ENCODE measurements at regions of chr17 and their contacts with region 1.

Region 1: DNA sequence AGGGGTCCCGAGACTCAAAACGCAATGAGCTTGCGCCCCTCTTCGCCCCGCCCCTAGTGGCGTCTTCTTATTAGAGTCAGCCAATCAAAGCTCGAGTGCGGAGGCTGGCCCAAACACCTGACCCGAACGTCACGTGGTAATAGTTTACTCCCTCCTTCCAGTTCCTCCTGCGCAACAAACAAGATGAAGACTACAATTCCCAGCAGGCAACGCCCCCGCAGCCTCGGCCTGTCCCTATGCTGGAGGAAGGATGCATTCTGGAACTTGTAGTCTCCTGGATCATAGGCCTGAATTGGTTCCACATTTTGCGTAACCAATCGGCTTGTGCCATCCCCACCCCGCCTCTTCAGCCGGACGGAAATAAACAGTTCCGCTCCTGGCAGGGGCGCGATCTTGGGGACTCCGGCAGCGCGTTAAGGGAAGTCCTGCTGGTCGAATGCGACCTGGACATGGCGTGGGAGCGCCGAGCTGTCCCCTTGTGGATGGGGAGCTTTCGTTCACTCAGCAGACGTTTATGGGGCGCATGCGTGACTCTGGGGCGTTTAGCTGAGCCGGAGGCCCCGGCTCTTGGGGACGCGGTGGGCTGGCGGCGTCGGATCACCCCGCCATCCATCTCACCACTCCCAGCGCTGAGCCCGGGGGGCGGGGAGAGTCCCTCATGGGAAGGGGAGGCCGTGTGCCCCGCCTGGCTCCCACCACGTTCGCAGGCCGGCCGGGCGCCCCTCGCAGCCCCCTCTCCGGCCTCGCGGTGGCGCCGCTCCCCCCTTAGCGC is at the start of gene WBP2:
- DNase-seq: peak; percentile 99
- ATAC-seq: peak; percentile 90
- H3K4me3 Mint-ChIP-seq: no peak within 1 kb of the TSS
- H3K27ac Mint-ChIP-seq: peak within 1 kb of the TSS; percentile 95
- H3K4me1 Mint-ChIP-seq: peaks cover 38% of the 10 kb centered on the region
- H3K27me3 Mint-ChIP-seq: no peaks in the 10 kb centered on the region
- total RNA-seq, gene WBP2: 71.3 to 79.1 TPM

Region 2: DNA sequence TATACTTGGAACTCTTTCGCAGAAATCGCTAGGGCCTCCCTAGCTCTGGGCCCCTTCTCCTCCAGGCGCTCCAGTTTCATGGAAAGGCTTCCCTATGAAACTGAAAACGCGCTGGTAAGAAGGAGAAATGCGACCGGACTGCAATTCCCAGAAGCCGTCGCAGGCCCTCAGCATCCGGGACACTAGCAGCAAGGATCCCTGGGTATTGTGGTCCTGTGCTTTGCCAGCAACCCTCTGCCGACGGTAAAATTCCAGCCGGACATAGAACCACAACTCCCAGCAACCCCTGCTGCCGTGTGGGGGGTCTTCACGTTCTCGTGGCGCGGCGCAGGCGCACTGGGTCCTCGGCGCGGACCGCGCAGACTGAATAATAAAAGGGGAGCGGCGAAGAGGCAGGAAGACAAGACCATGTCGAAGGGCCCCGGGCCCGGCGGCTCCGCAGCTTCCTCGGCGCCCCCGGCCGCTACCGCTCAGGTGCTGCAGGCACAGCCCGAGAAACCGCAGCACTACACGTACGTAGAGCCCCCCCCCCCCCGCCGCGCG is 71.0 kb before region 1 on chr17 and contains the start of gene UNK:
- CTCF ChIA-PET with region 1: interaction called, 12 read pairs
- DNase-seq: peak; percentile 99
- ATAC-seq: peak; percentile 72
- H3K4me3 Mint-ChIP-seq: peak within 1 kb of the TSS; percentile 79
- H3K27ac Mint-ChIP-seq: peak within 1 kb of the TSS; percentile 100
- H3K4me1 Mint-ChIP-seq: peaks cover 50% of the 10 kb centered on the region
- H3K27me3 Mint-ChIP-seq: peaks cover 1% of the 10 kb centered on the region
- total RNA-seq, gene UNK: 32.8 to 33.1 TPM

Region 3: GRCh38 chr17:75845049-75845860 is 10.2 kb before region 1 on chr17:
- CTCF ChIA-PET with region 1: interaction called, 49 read pairs
- DNase-seq: peak; percentile 79
- ATAC-seq: peak; percentile 52
- H3K4me3 Mint-ChIP-seq: peak overlapping the region; percentile 39
- H3K27ac Mint-ChIP-seq: peak overlapping the region; percentile 61
- H3K4me1 Mint-ChIP-seq: peaks cover 27% of the 10 kb centered on the region
- H3K27me3 Mint-ChIP-seq: no peaks in the 10 kb centered on the region

Region 4: DNA sequence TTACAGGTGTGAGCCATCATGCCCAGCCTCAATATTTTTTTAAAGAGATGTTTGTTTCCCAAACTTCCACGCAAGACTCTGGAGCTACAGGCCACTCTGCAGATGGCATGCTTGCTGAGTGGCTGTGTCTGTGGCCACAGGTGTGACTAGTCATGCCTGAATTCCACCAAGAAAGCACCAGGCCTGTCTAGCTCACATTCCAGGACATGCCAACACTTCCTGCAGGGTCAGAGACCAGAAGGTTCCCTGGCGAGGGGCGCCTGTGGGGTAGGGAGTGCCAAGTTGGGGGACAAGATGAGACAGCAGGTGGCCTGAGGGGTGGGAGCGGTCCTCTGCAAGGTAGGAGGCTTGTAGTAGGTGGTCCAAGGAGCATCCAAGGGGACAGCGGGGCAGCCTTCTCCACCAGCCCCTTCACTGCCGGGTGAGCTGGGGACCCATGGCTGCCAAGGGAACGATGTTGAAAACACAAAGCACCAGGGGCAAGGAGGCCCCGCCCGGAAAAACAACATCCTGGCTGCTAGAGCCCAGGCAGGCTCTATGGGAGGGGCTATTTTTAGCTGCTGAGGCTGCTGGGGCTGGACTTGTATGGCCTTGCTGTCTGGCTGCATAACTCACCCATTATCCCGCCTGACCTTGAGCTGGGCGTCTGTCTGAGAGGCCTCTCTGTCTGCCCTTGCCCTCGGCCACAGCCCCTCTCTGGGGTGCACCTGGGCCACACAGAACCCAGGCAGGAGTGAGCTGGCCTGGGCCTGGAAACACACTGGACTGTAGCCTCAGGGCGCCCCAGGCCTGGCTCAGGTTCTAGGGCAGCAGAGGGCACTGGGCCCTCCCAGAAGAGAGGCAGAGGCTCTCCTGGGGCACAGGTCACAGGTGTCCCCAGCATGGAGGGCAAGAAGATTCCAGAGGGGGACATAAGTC is 17.2 kb after region 1 on chr17:
- CTCF ChIA-PET with region 1: interaction called, 175 read pairs
- DNase-seq: peak; percentile 87
- ATAC-seq: peak; percentile 68
- H3K4me3 Mint-ChIP-seq: no peak overlapping the region
- H3K27ac Mint-ChIP-seq: peak overlapping the region; percentile 94
- H3K4me1 Mint-ChIP-seq: peaks cover 35% of the 10 kb centered on the region
- H3K27me3 Mint-ChIP-seq: peaks cover 2% of the 10 kb centered on the region

Region 5: DNA sequence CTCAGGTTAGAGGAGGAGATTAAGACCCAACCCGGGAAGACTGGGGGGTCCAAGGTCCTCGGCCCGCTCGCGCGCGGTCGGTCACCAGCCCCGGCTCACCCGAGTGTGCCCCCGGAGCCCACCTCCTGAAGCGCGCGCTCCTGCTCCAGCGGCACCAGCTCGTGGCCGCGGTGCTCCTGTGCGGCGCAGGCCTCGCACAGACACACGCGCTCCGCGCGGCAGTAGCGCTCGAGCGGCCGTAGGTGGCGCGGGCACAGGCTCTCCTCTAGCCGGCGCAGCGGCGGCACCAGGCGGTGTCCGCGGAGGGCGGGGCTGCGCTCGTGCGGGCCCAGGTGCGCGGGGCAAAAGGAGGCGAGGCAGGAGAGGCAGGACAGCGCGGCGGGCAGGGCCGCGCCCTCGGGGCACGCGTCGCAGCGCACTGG is 22.3 kb after region 1 on chr17:
- CTCF ChIA-PET with region 1: interaction called, 175 read pairs
- DNase-seq: peak; percentile 82
- ATAC-seq: peak; percentile 82
- H3K4me3 Mint-ChIP-seq: peak overlapping the region; percentile 88
- H3K27ac Mint-ChIP-seq: peak overlapping the region; percentile 91
- H3K4me1 Mint-ChIP-seq: peaks cover 37% of the 10 kb centered on the region
- H3K27me3 Mint-ChIP-seq: peaks cover 28% of the 10 kb centered on the region

Region 6: DNA sequence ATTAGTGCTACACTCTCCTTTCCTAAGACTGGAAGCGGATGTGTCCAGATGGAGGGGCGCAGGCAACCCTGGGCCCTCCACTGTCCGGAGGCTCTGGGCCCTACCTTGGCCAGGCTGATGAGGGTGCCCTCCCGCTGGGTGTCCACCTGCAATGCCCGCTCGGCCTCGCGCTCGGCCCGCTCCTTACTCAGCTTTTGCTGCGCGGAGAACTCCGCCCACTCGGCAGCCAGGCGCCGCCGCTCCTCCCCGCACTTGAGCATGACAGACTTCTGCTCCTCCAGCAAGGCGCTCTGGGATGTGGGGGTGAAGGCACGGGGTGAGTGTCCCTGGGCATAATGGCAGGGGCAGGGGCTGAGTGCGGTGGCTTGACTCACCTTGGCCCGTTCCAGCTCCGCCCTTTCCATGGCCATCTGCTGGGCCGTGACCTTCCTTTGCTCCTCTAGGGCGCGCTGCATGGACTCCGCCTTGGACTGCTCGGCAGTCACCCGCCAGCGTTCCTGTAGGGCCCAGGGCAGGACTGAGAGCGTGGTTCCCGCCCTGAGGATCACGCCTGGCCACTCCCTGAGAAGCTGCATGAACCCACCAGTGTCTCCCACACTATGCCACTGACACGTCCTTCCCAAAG is 59.3 kb after region 1 on chr17:
- CTCF ChIA-PET with region 1: no interaction called
- DNase-seq: no peak
- ATAC-seq: no peak
- H3K4me3 Mint-ChIP-seq: no peak overlapping the region
- H3K27ac Mint-ChIP-seq: no peak overlapping the region
- H3K4me1 Mint-ChIP-seq: peaks cover 10% of the 10 kb centered on the region
- H3K27me3 Mint-ChIP-seq: no peaks in the 10 kb centered on the region

Region 7: GRCh38 chr17:76027159-76027839 is 171.8 kb after region 1 on chr17 and contains the start of gene EVPL:
- CTCF ChIA-PET with region 1: no interaction called
- DNase-seq: no peak
- ATAC-seq: no peak
- H3K4me3 Mint-ChIP-seq: no peak within 1 kb of the TSS
- H3K27ac Mint-ChIP-seq: no peak within 1 kb of the TSS
- H3K4me1 Mint-ChIP-seq: peaks cover 12% of the 10 kb centered on the region
- H3K27me3 Mint-ChIP-seq: no peaks in the 10 kb centered on the region
- total RNA-seq, gene EVPL: 0.03 TPM in 1 of 2 experiments, not detected in the other

Measured in activated CD8-positive, alpha-beta memory T cell treated with anti-CD3 and anti-CD28 coated beads, Interleukin-2, amount 10 ng/mL, durations not matched to agents 7 days and 5 days (primary cell).